Panc1 (cell line): ENCODE measurements at regions of chr3 and their contacts with region 1.

Region 1: GRCh38 chr3:117532268-117532667 is 822.7 kb downstream of the TUSC7 start:
- DNase-seq: no peak
- ATAC-seq: no peak
- H3K4me3 ChIP-seq: no peak overlapping the region
- H3K27ac ChIP-seq: no peak overlapping the region
- H3K4me1 ChIP-seq: no peaks in the 10 kb centered on the region
- H3K27me3 ChIP-seq: no peaks in the 10 kb centered on the region
- CTCF ChIP-seq: no peak

Region 2: GRCh38 chr3:116671151-116671550 is 861.1 kb before region 1 on chr3:
- CTCF ChIA-PET with region 1: interaction called, 11 read pairs
- POLR2A ChIA-PET with region 1: no interaction called
- in situ Hi-C with region 1: no loop called
- intact Hi-C with region 1: no loop called
- DNase-seq: no peak
- ATAC-seq: no peak
- H3K4me3 ChIP-seq: no peak overlapping the region
- H3K27ac ChIP-seq: no peak overlapping the region
- H3K4me1 ChIP-seq: no peaks in the 10 kb centered on the region
- H3K27me3 ChIP-seq: no peaks in the 10 kb centered on the region
- CTCF ChIP-seq: no peak

Region 3: GRCh38 chr3:117473981-117474538 is 58.2 kb before region 1 on chr3:
- CTCF ChIA-PET with region 1: no interaction called
- POLR2A ChIA-PET with region 1: interaction called, 13 read pairs
- in situ Hi-C with region 1: no loop called
- intact Hi-C with region 1: no loop called
- DNase-seq: no peak
- ATAC-seq: no peak
- H3K4me3 ChIP-seq: no peak overlapping the region
- H3K27ac ChIP-seq: no peak overlapping the region
- H3K4me1 ChIP-seq: no peaks in the 10 kb centered on the region
- H3K27me3 ChIP-seq: no peaks in the 10 kb centered on the region
- CTCF ChIP-seq: no peak

Region 4: GRCh38 chr3:119463171-119464169 is 1931.2 kb after region 1 on chr3 and contains the start of gene TMEM39A:
- CTCF ChIA-PET with region 1: no interaction called
- POLR2A ChIA-PET with region 1: no interaction called
- in situ Hi-C with region 1: no loop called
- intact Hi-C with region 1: no loop called
- DNase-seq: peak; percentile 91
- ATAC-seq: peak; percentile 99
- H3K4me3 ChIP-seq: peak within 1 kb of the TSS; percentile 80 to 97
- H3K27ac ChIP-seq: peak within 1 kb of the TSS; percentile 97
- H3K4me1 ChIP-seq: peaks cover 14% of the 10 kb centered on the region
- H3K27me3 ChIP-seq: no peaks in the 10 kb centered on the region
- CTCF ChIP-seq: no peak
- total RNA-seq, gene TMEM39A: 47.8 TPM